ENCODE measurements at regions of chr18 and their contacts with region 1.

Region 1: DNA sequence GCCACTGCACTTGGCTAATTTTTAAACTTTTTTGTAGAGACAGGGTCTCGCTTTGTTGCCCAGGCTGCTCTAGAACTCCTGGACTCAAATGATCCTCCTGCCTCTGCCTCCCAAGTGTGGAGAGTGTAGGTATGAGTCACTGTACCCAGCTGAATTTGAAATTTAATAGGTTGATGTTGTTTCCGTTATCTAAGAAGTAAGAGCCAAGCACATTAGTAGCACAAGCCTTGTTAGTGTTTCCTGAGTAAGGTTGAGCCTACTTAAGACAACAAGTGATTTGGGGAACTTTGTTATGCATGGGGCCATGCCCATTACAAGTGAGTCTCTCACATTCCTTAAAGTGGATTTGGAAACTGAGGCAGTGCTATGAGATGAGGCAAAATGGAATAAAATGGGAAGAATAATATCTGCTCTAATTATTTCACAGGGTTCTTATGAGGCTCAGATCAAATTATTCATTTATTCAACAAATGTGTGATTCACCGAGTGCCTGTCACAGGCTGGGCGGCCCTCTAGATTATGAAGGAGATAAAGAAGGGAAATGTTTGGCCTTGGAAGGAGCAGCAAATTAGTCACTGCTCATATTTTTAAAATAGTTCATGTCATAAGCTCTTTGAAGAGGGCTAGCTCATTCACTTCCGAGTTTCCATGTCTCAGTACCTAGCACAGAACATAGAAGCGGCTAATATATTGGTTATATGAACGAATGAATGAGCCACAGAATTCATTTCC is 217.2 kb downstream of the LDLRAD4 start:
- DNase-seq: peak; percentile 23
- ATAC-seq: no peak
- H3K4me3 Mint-ChIP-seq: no peak overlapping the region
- H3K27ac Mint-ChIP-seq: peak overlapping the region; percentile 86
- H3K4me1 Mint-ChIP-seq: peaks cover 67% of the 10 kb centered on the region
- H3K27me3 Mint-ChIP-seq: no peaks in the 10 kb centered on the region

Region 2: GRCh38 chr18:12295901-12296386 is 1139.8 kb before region 1 on chr18:
- CTCF ChIA-PET with region 1: no interaction called
- POLR2A ChIA-PET with region 1: no interaction called
- intact Hi-C with region 1: no loop called
- DNase-seq: peak; percentile 19
- ATAC-seq: peak; percentile 51
- H3K4me3 Mint-ChIP-seq: no peak overlapping the region
- H3K27ac Mint-ChIP-seq: no peak overlapping the region
- H3K4me1 Mint-ChIP-seq: no peaks in the 10 kb centered on the region
- H3K27me3 Mint-ChIP-seq: peaks cover 19% of the 10 kb centered on the region

Region 3: DNA sequence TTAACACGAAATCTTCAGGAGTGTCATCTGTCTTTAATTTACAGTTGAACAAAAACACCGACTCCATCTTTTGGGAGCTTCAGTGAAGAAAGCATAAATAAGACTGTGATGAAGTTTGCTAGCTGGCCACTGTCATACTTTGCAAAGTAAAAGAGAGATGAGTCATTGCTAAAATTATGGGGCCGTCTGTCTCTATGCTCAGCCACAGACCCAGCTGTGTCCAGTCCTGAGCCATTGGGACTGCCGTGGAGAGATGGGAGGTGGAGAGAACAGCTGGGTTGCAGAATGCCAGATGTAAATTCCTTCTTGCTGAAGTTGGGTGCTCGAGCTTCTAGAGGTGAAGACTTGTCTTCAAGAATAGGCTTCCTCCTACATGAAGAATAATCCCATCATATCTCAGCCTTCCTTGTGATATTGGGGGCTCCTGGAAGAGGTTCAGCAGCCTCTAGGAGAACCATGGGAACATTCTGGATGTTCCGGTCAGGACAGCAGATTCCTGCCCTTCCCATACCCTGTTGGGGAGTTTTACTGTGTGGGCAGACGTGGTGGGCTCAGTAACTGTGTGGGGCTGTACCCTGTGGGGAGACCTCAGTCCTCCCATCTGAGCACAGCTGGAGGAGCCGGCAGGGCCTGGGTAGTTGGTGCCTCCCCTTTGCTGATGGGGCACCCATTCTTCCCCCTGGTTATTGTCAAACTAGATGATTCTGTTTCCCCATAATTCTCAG is 146.1 kb before region 1 on chr18:
- CTCF ChIA-PET with region 1: no interaction called
- POLR2A ChIA-PET with region 1: no interaction called
- intact Hi-C with region 1: loop called in 1 of 2 experiments (anchors 5 kb)
- DNase-seq: no peak
- ATAC-seq: no peak
- H3K4me3 Mint-ChIP-seq: no peak overlapping the region
- H3K27ac Mint-ChIP-seq: peak overlapping the region; percentile 48
- H3K4me1 Mint-ChIP-seq: peaks cover 52% of the 10 kb centered on the region
- H3K27me3 Mint-ChIP-seq: no peaks in the 10 kb centered on the region

Region 4: DNA sequence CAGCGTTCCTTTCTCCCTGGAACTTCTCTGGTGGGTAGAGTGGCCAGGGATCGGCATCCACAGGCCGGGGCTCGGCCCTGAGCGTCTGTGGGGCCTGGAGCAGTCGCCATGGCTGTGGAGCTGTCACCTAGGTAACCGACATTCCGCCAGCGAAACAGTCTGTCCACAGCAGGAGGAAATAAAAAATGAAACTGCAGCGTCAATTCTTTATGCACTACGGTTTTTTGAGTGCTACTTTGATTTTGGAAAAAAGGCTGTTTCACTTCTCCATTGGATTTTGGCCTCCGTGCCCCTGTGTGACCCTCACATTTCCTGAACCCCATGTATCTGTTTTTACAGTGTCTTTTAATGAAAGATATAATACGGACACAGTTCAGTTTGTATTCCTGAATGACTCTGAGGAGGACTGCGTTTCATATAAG is 53.8 kb before region 1 on chr18:
- CTCF ChIA-PET with region 1: no interaction called
- POLR2A ChIA-PET with region 1: interaction called, 5 read pairs
- intact Hi-C with region 1: loop called (anchors 1 to 2 kb)
- DNase-seq: peak; percentile 59
- ATAC-seq: peak; percentile 26
- H3K4me3 Mint-ChIP-seq: peak overlapping the region; percentile 72
- H3K27ac Mint-ChIP-seq: peak overlapping the region; percentile 98
- H3K4me1 Mint-ChIP-seq: peaks cover 76% of the 10 kb centered on the region
- H3K27me3 Mint-ChIP-seq: no peaks in the 10 kb centered on the region

Region 5: GRCh38 chr18:13455960-13456471 is 20.3 kb after region 1 on chr18:
- CTCF ChIA-PET with region 1: no interaction called
- POLR2A ChIA-PET with region 1: no interaction called
- intact Hi-C with region 1: loop called in 1 of 2 experiments (anchors 1 kb)
- DNase-seq: peak; percentile 73
- ATAC-seq: peak; percentile 83
- H3K4me3 Mint-ChIP-seq: peak overlapping the region; percentile 31
- H3K27ac Mint-ChIP-seq: peak overlapping the region; percentile 37
- H3K4me1 Mint-ChIP-seq: peaks cover 28% of the 10 kb centered on the region
- H3K27me3 Mint-ChIP-seq: no peaks in the 10 kb centered on the region

Region 6: DNA sequence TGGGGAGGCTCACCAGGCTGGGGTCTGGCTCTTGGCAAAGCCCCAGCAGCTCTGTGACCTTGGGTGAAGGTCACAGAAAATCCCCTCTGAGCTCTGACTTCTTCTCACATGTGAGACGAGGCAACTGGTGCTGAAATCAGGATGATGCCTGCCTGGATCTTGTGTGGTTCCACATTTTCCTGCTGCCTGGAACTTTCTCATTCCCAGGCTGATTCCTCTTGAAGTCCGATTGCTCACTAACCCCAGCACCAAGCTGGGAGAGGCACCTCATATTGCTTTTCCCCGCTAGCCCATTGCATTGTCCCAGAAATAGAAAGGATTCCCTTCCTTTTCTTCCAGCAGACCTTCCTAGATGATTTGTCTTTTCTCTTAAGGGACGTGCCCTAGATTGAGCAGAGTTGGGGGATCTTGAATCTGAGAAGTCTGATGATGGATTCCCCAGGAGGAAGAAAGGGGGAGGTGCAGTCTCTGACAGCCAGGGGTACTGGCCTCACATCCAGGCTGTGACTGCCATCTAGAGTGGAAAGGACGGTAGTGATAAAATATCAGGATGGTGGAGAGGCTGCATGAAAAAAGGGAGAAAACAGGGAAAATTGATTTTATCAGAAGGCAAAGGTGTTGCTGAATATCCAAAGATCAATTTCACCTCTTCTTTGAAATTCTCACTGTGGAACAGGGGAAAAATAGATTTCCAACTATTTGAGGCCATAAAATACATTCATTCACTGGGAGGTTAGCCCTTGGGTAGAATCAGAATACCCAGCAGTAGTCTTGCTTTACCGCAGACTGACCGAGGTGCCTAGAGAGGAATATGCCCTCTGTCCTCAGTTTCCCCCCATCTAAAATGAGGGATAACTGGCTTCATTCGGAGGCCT is 194.3 kb after region 1 on chr18:
- CTCF ChIA-PET with region 1: no interaction called
- POLR2A ChIA-PET with region 1: no interaction called
- intact Hi-C with region 1: loop called in 1 of 2 experiments (anchors 2 kb)
- DNase-seq: peak; percentile 69
- ATAC-seq: peak; percentile 98
- H3K4me3 Mint-ChIP-seq: no peak overlapping the region
- H3K27ac Mint-ChIP-seq: peak overlapping the region; percentile 52
- H3K4me1 Mint-ChIP-seq: peaks cover 4% of the 10 kb centered on the region
- H3K27me3 Mint-ChIP-seq: no peaks in the 10 kb centered on the region